WTC11 (cell line): ENCODE measurements at regions of chr9 and their contacts with region 1.

Region 1: GRCh38 chr9:127734747-127735529 is at the start of gene TOR2A:
- DNase-seq: peak; percentile 99
- ATAC-seq: peak; percentile 90
- H3K4me3 Mint-ChIP-seq: peak within 1 kb of the TSS; percentile 72
- H3K27ac Mint-ChIP-seq: no peak within 1 kb of the TSS
- H3K4me1 Mint-ChIP-seq: peaks cover 11% of the 10 kb centered on the region
- H3K27me3 Mint-ChIP-seq: peaks cover 7% of the 10 kb centered on the region
- CTCF ChIP-seq: peak; percentile 63
- total RNA-seq, gene TOR2A: 14.4 to 19.4 TPM (median 16.6 TPM) in 3 replicates

Region 2: GRCh38 chr9:127503947-127504782 is 230.8 kb before region 1 on chr9:
- CTCF ChIA-PET with region 1: interaction called, 36 read pairs
- POLR2A ChIA-PET with region 1: no interaction called
- DNase-seq: peak; percentile 94
- ATAC-seq: peak; percentile 84
- H3K4me3 Mint-ChIP-seq: no peak overlapping the region
- H3K27ac Mint-ChIP-seq: no peak overlapping the region
- H3K4me1 Mint-ChIP-seq: no peaks in the 10 kb centered on the region
- H3K27me3 Mint-ChIP-seq: no peaks in the 10 kb centered on the region
- CTCF ChIP-seq: peak; percentile 89

Region 3: DNA sequence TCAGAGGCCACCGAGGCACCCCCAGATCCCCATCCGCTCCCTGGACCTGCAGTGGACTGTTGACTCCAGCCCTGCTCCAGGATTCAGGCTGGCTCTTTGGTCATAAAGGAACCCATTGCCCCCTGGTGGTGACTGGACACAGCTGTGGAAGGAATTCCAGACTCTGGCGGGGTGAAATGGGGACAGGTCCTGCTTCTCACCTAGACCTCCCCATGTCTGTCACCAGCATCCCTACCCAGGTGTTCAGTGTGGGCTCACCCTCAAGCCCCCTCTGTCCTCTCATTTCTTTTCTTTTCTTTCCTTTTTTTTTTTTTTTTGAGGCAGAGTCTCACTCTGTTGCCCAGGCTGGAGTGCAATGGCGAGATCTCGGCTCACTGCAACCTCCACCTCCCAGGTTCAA is 148.4 kb before region 1 on chr9:
- CTCF ChIA-PET with region 1: interaction called, 80 read pairs
- POLR2A ChIA-PET with region 1: no interaction called
- DNase-seq: peak; percentile 86
- ATAC-seq: peak; percentile 92
- H3K4me3 Mint-ChIP-seq: no peak overlapping the region
- H3K27ac Mint-ChIP-seq: no peak overlapping the region
- H3K4me1 Mint-ChIP-seq: peaks cover 15% of the 10 kb centered on the region
- H3K27me3 Mint-ChIP-seq: no peaks in the 10 kb centered on the region
- CTCF ChIP-seq: peak; percentile 72

Region 4: GRCh38 chr9:127698985-127699670 is 35.8 kb before region 1 on chr9:
- CTCF ChIA-PET with region 1: interaction called, 56 read pairs
- POLR2A ChIA-PET with region 1: no interaction called
- DNase-seq: peak; percentile 95
- ATAC-seq: peak; percentile 99
- H3K4me3 Mint-ChIP-seq: peak overlapping the region; percentile 74
- H3K27ac Mint-ChIP-seq: peak overlapping the region; percentile 92
- H3K4me1 Mint-ChIP-seq: 0 out of 2 replicates have a peak, but pooled peaks cover 3% of the 10 kb centered on the region
- H3K27me3 Mint-ChIP-seq: peaks cover 4% of the 10 kb centered on the region
- CTCF ChIP-seq: no peak

Region 5: DNA sequence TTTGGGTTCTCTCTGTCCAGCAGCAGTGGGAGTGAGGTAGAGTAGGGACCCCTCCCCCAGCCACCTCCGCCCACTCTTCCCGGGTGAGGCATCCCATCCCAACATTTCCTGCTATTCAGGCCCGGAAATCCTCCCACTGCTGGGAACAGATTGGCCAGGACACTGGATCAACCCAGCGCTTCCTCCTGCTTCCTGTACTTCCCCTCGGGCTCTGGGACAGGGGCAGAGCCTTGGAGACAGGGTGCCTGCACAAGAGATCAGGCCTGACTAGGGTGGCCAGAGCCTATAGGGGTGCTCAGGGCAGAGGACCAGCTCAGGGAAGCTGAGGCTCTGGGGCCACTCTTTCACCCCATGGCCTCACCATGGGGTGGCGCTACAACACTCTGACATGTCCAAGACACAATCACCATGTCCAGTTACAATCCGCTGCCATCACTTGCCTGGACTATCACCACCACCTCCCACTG is 29.0 kb after region 1 on chr9:
- CTCF ChIA-PET with region 1: interaction called, 15 read pairs
- POLR2A ChIA-PET with region 1: no interaction called
- DNase-seq: peak; percentile 78
- ATAC-seq: peak; percentile 78
- H3K4me3 Mint-ChIP-seq: no peak overlapping the region
- H3K27ac Mint-ChIP-seq: peak overlapping the region; percentile 8; the same call in 1 of the 2 replicates
- H3K4me1 Mint-ChIP-seq: peaks cover 44% of the 10 kb centered on the region
- H3K27me3 Mint-ChIP-seq: peaks cover 4% of the 10 kb centered on the region; the same call in 1 of the 2 replicates
- CTCF ChIP-seq: 0 out of 2 replicates have a peak, but pooled peaks have one; percentile 37

Region 6: GRCh38 chr9:127802576-127803443 is 67.9 kb after region 1 on chr9 and contains the start of gene FPGS:
- CTCF ChIA-PET with region 1: interaction called, 13 read pairs
- POLR2A ChIA-PET with region 1: no interaction called
- DNase-seq: peak; percentile 85
- ATAC-seq: peak; percentile 85
- H3K4me3 Mint-ChIP-seq: peak within 1 kb of the TSS; percentile 99
- H3K27ac Mint-ChIP-seq: peak within 1 kb of the TSS; percentile 98
- H3K4me1 Mint-ChIP-seq: peaks cover 8% of the 10 kb centered on the region
- H3K27me3 Mint-ChIP-seq: no peaks in the 10 kb centered on the region
- CTCF ChIP-seq: no peak
- total RNA-seq, gene FPGS: 67.7 to 81.7 TPM (median 69.3 TPM) in 3 replicates

Region 7: DNA sequence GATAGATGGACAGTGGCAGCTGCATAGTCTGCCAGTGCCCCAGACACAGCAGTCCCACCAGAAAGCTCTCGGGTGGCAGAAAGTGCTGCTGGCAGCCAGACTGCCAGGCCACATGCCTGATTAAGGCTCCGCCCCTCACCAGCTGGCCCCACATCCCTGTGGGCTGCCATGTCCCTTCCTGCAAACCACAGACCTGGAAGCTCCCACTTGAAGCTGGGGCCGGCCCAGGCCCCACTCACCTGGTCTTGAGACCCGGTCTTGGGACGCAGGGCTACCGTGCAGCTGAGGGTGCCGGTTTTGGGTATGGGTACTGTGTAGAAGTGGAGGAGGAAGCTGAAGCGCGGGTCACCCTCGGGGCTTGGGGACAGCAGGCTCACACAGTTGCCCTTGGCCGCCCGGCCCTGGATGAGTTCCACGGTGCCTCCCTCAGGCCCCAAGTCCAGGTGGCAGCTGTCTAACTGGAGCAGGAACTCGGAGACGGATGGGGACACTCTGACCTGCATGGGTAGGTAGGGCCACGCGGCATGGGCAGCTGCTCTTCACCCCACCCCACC is 83.0 kb after region 1 on chr9:
- CTCF ChIA-PET with region 1: no interaction called
- POLR2A ChIA-PET with region 1: no interaction called
- DNase-seq: no peak
- ATAC-seq: no peak
- H3K4me3 Mint-ChIP-seq: no peak overlapping the region
- H3K27ac Mint-ChIP-seq: 0 out of 2 replicates have a peak overlapping the region, but pooled peaks have one; percentile 11
- H3K4me1 Mint-ChIP-seq: no peaks in the 10 kb centered on the region
- H3K27me3 Mint-ChIP-seq: no peaks in the 10 kb centered on the region
- CTCF ChIP-seq: no peak

Region 8: DNA sequence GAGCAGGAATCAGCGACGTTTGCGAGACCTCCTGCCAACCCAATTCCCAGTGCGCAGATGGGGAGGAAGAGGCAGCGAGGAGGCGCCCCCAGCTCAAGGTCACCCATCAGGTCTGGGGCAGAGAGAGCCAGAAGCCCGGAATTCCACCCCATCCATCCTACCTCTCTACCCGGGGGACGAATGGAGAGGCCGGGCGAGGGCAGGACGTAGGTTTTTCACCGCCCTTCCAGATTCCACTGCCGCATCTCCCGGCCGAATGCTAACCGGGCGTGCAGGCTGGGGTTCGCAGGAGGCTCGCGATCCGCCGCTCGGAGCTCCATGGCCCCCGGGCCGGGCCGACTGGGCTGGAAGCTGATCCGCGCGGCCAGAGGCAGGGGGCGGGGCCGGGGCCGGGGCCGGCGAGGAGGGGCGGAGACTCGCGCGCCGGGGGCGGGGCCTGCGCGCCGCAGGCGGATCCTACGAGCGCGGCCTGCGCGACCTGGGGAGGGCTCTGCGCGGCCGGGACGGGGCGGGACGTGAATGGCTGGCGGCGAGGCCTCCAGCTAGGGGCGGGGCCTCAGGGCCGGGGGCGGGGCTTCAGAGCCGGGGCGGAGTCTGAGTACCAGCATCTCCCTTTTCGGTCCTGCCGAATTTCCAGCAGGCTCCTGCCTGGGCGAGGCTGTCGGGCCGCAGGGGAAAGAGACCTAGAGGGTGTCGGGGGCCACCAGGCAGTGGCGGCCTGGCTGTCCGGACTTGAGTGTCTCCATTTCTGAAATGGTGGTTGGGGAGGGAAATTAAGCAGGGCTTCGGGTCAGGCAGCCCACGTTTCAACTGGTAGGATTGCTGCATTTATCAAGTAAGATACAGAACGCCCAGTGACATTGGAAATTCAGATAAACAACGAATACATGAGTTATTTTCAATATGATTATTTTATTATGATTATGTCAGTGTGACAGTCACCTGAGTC is 182.0 kb after region 1 on chr9 and contains the start of gene ST6GALNAC4:
- CTCF ChIA-PET with region 1: interaction called, 19 read pairs
- POLR2A ChIA-PET with region 1: no interaction called
- DNase-seq: peak; percentile 96
- ATAC-seq: peak; percentile 92
- H3K4me3 Mint-ChIP-seq: peak within 1 kb of the TSS; percentile 74
- H3K27ac Mint-ChIP-seq: peak within 1 kb of the TSS; percentile 60; the same call in 1 of the 2 replicates
- H3K4me1 Mint-ChIP-seq: peaks cover 19% of the 10 kb centered on the region
- H3K27me3 Mint-ChIP-seq: peaks cover 7% of the 10 kb centered on the region
- CTCF ChIP-seq: no peak
- total RNA-seq, gene ST6GALNAC4: 25.1 to 25.7 TPM (median 25.4 TPM) in 3 replicates

Region 9: DNA sequence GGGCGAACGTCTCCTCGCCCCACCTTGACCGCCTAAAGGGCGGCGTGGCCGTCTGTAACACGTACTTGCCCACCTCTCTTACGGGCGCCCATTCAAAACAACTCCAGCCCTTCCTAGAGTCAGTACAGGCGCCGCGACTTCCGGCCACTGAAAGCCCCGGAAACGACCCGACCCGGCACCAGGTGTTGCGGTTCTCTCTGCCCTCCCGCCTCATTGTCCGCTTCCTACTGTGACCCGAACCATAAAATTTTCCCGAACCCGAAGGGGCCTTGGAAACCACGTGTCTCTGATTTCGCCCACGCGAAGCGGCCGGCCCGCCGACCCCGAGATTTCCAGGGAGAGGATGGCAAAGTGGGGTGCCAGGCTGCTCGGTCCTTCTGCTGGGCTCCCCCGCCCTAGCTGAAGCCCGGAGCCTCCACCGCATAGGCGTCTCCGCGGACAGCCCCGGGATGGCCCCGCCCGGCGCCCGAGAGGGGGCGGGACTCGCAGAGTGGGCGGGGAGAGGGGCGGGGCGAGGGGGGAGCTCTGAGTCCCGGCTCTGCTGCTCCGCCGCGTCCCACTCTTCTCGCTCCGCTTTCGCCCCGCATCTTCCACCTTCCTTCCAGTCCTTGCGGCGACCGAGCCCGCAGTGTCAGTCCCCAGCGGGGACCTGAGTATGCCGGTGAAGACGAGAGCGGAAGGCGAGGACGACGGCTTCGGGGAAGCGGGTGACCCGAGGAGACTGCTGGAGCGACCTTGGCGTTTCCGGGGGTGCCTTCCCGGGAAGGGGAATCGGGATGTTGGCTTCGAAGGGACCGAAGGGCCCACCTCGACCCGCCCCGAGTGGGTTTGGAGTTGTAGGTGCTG is 393.3 kb after region 1 on chr9:
- CTCF ChIA-PET with region 1: no interaction called
- POLR2A ChIA-PET with region 1: no interaction called
- DNase-seq: peak; percentile 80
- ATAC-seq: peak; percentile 80
- H3K4me3 Mint-ChIP-seq: peak overlapping the region; percentile 94
- H3K27ac Mint-ChIP-seq: peak overlapping the region; percentile 97
- H3K4me1 Mint-ChIP-seq: peaks cover 17% of the 10 kb centered on the region
- H3K27me3 Mint-ChIP-seq: peaks cover 19% of the 10 kb centered on the region
- CTCF ChIP-seq: no peak